AG04450 (cell line): ENCODE measurements at regions of chr1 and their contacts with region 1.

Region 1: DNA sequence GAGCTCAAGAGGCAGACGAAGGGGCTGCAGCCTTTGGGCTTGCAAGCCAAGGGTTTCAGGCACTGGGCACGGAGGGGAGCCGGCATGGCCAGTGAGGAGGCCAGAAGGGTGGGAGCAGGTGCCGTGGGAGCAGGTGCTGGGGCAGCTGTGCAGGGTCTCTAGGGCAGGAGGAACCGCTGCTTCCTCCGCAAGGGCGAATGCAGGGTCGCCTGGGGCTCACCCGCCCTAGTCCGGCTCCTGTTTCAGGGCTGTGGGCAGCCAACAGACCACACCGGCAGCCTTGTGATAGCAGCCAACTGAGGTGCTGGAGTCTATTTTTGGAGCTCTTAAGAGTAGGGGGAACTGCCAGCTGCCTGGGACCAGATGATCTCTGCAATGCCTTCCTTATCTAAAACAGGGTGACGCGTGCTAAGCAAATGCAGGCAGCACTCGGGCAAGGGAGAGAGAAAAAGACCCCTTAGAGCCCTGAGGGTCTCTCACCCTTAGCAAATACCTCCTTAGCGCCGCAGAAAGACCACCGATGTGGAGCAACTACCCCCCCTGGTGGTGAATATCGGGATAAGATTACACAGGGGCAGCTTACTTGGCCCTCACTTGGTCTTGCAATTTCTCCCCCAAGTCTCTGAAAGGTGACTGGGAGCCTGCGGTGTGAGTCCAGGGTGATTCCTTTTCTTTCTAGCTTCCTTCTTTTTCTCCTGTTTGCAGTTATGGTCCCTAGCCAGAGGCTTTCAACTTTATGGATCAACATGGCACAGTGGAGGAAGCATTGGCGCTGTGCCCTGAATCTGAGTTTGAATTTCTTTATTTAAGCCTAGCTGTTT is 20.7 kb upstream of the MAPKAPK2 start:
- DNase-seq: peak; percentile 29
- H3K4me3 ChIP-seq: peak overlapping the region; percentile 31; the same call in 1 of the 2 replicates
- H3K27ac ChIP-seq: no peak overlapping the region
- H3K27me3 ChIP-seq: peaks cover 14% of the 10 kb centered on the region
- CTCF ChIP-seq: peak; percentile 82

Region 2: GRCh38 chr1:206489980-206490770 is 173.9 kb before region 1 on chr1:
- CTCF ChIA-PET with region 1: interaction called, 53 read pairs
- POLR2A ChIA-PET with region 1: no interaction called
- DNase-seq: no peak
- H3K4me3 ChIP-seq: no peak overlapping the region
- H3K27ac ChIP-seq: no peak overlapping the region
- H3K27me3 ChIP-seq: no peaks in the 10 kb centered on the region
- CTCF ChIP-seq: peak; percentile 99

Region 3: GRCh38 chr1:206612129-206612876 is 51.7 kb before region 1 on chr1 and contains the start of gene EIF2D:
- CTCF ChIA-PET with region 1: interaction called, 104 read pairs
- POLR2A ChIA-PET with region 1: no interaction called
- DNase-seq: peak; percentile 73
- H3K4me3 ChIP-seq: peak within 1 kb of the TSS; percentile 93
- H3K27ac ChIP-seq: peak within 1 kb of the TSS; percentile 93
- H3K27me3 ChIP-seq: peaks cover 6% of the 10 kb centered on the region
- CTCF ChIP-seq: peak; percentile 91
- polyA plus RNA-seq, gene EIF2D: 71.8 and 74.0 TPM in 2 replicates

Region 4: DNA sequence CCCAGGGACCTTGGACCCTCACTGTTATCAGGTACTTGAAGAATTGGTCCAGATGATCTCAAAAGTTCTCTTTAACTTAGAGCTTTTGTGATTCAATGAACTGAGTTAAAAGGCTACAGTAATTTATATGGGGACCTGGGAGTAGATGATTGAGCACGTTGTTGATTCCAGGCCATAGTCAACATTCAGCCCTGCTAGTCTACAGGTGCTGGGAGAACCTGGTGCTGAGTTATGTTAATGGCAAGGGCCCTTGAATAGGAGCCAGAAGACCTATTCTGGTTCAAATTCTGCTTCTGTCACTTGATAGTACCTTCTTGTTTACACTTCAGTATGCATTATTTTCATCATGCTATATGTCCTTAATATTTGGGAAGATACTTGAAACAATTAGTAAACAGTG is 17.5 kb before region 1 on chr1:
- CTCF ChIA-PET with region 1: interaction called, 72 read pairs
- POLR2A ChIA-PET with region 1: no interaction called
- DNase-seq: no peak
- H3K4me3 ChIP-seq: no peak overlapping the region
- H3K27ac ChIP-seq: no peak overlapping the region
- H3K27me3 ChIP-seq: no peaks in the 10 kb centered on the region
- CTCF ChIP-seq: no peak

Region 5: GRCh38 chr1:206679738-206680211 is 15.7 kb after region 1 on chr1:
- CTCF ChIA-PET with region 1: interaction called, 104 read pairs
- POLR2A ChIA-PET with region 1: interaction called, 3 read pairs
- DNase-seq: no peak
- H3K4me3 ChIP-seq: no peak overlapping the region
- H3K27ac ChIP-seq: no peak overlapping the region
- H3K27me3 ChIP-seq: no peaks in the 10 kb centered on the region
- CTCF ChIP-seq: no peak

Region 6: DNA sequence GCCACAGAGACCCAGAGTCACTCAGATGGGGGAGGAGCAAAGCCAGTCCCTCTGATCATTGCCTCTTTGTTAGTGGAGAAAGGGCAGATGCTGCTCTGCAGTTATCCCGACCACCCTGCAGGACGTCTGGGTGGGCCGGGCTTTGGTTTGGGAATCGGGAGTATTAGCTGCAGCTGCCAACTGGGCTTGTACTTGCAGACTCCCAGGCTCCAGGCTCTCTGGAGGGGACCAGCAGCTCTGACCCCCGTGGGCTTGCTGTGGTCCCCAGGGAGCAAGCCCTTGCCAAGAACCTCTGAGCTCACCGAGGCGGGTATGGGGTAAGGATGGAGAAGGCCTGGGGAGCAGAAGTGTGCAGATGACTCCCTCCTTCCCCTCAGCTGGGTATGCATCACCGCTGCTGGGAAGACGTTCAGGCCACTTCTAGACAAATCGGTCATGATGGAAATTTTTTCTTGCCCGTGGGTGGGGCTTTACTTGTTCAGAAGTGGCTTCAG is 42.3 kb after region 1 on chr1:
- CTCF ChIA-PET with region 1: interaction called, 16 read pairs
- POLR2A ChIA-PET with region 1: no interaction called
- DNase-seq: peak; percentile 61
- H3K4me3 ChIP-seq: no peak overlapping the region
- H3K27ac ChIP-seq: no peak overlapping the region
- H3K27me3 ChIP-seq: no peaks in the 10 kb centered on the region
- CTCF ChIP-seq: no peak

Region 7: DNA sequence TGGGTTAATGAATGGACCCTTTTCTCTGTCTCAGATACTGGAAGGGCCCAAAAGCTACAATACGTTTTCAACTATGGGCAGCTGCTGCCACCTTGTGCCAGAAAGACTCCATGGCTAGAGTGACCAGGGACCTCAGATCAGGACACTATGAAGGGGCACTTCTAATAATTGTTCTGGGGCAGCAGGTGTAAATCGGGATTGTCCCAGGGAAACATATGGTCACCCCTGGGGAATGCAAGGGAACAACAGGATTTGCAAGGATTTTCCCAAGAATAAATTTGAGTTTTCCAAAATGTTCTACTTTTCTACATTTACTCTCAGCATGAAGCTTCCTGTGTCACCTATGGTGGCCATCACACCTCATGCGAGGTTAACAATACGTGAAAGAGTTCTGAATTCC is 318.2 kb after region 1 on chr1:
- CTCF ChIA-PET with region 1: interaction called, 10 read pairs
- POLR2A ChIA-PET with region 1: no interaction called
- DNase-seq: no peak
- H3K4me3 ChIP-seq: no peak overlapping the region
- H3K27ac ChIP-seq: no peak overlapping the region
- H3K27me3 ChIP-seq: peaks cover 42% of the 10 kb centered on the region
- CTCF ChIP-seq: peak; percentile 67